ENCODE measurements at regions of chr12 and their contacts with region 1.

Region 1: DNA sequence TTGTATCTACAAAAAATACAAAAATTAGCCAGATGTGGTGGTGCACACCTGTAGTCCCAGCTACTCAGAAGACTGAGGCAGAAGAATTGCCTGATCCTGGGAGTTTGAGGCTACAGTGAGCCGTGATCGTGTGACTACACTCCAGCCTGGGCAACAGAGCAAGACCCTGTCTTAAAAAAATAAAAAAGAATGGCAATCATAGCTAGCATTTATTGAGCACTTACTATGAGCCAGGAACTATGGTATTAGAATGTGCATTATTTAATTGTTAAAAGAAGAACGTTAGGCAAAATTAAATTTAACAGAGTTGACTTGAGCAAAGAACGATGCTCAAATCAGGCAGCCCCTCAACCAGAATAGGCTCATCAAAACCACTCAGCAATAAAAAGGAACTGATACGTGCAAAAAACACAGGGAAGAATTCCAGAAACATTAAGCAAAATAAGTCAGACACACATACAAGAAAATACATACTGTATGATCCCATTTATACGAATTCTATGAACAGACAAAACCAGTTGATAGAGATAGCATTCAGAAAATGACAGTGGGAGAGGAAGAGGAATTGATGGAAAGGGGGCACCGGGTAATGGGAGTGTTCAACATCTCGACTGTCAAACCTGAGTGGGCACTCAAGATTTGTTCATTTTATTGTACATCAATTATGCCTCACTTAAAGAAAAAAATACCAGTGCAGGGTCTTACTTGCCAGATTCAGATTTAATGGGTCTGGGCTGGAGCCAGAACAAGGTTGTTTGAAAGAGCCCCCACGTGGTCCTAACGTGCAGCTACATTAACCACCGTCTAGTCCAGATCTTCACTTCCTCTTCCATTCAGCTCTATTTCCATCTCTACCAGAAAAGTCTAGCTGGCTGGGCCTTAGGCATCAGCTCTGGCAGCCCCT is 8.0 kb downstream of the SCNN1A start:
- DNase-seq: no peak
- ATAC-seq: no peak
- H3K4me3 Mint-ChIP-seq: no peak overlapping the region
- H3K27ac Mint-ChIP-seq: peak overlapping the region; percentile 33; the same call in 1 of the 2 replicates
- H3K4me1 Mint-ChIP-seq: peaks cover 58% of the 10 kb centered on the region
- H3K27me3 Mint-ChIP-seq: no peaks in the 10 kb centered on the region
- CTCF ChIP-seq: no peak

Region 2: DNA sequence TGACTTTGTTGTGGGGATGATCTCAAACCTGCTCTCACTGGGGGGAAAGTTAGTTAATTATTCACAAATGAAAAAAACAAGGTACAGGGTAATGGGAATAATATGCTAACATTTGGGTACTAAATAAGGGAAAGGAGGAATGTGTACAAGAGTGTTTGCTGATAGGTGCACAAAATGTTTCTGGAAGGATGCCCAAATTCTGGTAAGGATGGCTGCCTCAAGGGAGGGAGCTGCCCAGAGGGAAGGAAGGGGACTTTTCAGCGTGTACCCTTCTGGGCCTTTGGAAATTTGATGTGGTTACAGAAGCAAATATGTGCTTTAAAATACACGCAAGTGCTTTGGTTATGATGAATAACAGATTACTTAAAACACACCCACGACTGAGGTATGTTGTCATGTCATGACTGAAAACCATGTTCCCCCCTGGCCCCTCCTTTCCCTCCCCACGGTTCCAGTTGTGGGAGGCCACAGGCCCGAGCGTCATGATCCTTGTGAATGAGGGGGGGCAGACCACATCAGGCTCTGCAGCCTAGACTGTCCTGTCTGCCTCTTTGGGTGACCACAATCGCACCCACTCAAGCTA is 100.1 kb before region 1 on chr12:
- CTCF ChIA-PET with region 1: no interaction called
- POLR2A ChIA-PET with region 1: no interaction called
- DNase-seq: no peak
- ATAC-seq: no peak
- H3K4me3 Mint-ChIP-seq: no peak overlapping the region
- H3K27ac Mint-ChIP-seq: no peak overlapping the region
- H3K4me1 Mint-ChIP-seq: peaks cover 48% of the 10 kb centered on the region
- H3K27me3 Mint-ChIP-seq: peaks cover 3% of the 10 kb centered on the region; the same call in 1 of the 2 replicates
- CTCF ChIP-seq: no peak

Region 3: GRCh38 chr12:6335451-6336078 is 31.8 kb before region 1 on chr12:
- CTCF ChIA-PET with region 1: interaction called, 24 read pairs
- POLR2A ChIA-PET with region 1: interaction called, 48 read pairs
- DNase-seq: peak; percentile 51
- ATAC-seq: peak; percentile 10
- H3K4me3 Mint-ChIP-seq: no peak overlapping the region; the same call in none of the 2 replicates
- H3K27ac Mint-ChIP-seq: no peak overlapping the region
- H3K4me1 Mint-ChIP-seq: peaks cover 18% of the 10 kb centered on the region
- H3K27me3 Mint-ChIP-seq: no peaks in the 10 kb centered on the region
- CTCF ChIP-seq: no peak